ENCODE measurements at regions of chr4 and their contacts with region 1.

Region 1: DNA sequence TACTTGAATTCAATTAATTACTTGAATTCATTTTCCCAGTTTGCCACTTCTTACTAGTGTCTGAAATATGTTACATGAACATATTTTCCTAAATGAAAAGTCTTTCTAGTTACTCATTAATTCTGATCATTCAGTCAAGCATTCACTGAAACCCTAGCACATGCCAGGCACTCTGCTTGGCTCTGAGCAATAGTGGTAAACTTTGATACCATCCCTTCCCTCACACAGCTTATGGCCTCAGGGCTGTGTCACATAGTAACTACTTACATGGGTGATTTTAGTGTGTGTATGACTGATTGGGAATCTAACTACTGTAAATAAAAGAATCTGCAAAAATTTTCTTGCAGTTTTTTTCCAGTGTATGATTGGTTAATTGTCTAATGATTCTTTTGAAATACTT is 32.7 kb downstream of the METAP1 start:
- DNase-seq: no peak
- ATAC-seq: peak; percentile 56
- H3K4me3 Mint-ChIP-seq: no peak overlapping the region
- H3K27ac Mint-ChIP-seq: peak overlapping the region; percentile 13
- H3K4me1 Mint-ChIP-seq: peaks cover 62% of the 10 kb centered on the region
- H3K27me3 Mint-ChIP-seq: no peaks in the 10 kb centered on the region
- CTCF ChIP-seq: no peak

Region 2: DNA sequence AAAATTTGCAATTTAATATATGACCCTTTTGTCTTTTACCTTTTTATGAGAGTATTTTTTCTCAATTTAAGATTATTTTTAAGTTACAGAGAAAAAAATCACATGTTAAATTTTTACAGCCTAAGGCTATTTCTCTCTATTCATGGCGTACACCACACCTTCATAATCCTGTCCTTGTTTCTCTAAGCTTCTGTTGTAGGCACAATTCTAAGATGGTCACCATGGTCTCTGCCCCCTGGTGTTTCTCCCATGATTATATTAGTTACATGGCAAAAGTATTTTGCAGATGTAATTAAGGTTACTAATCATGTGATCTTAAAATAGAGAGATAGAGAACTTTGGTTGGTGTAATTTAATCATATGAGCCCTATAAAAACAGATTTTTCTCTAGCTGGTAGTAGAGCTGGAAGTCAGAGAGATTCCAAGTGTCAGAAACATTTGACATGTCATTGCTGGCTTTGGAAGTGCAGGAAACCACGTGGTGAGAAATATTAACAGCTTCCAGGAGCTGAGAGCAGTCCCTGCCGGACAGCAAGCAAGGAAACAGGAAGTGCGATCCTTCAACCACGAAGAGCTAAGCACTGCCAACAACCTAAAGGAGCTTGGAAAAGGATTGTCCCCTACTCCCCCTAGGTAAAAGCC is 189.1 kb before region 1 on chr4:
- CTCF ChIA-PET with region 1: no interaction called
- POLR2A ChIA-PET with region 1: no interaction called
- intact Hi-C with region 1: no loop called
- DNase-seq: no peak
- ATAC-seq: no peak
- H3K4me3 Mint-ChIP-seq: no peak overlapping the region
- H3K27ac Mint-ChIP-seq: no peak overlapping the region
- H3K4me1 Mint-ChIP-seq: peaks cover 4% of the 10 kb centered on the region
- H3K27me3 Mint-ChIP-seq: no peaks in the 10 kb centered on the region
- CTCF ChIP-seq: no peak

Region 3: GRCh38 chr4:99008051-99008450 is 20.1 kb before region 1 on chr4:
- CTCF ChIA-PET with region 1: no interaction called
- POLR2A ChIA-PET with region 1: interaction called, 3 read pairs
- intact Hi-C with region 1: loop called (anchors 2 kb)
- DNase-seq: no peak
- ATAC-seq: no peak
- H3K4me3 Mint-ChIP-seq: no peak overlapping the region
- H3K27ac Mint-ChIP-seq: no peak overlapping the region
- H3K4me1 Mint-ChIP-seq: peaks cover 22% of the 10 kb centered on the region
- H3K27me3 Mint-ChIP-seq: no peaks in the 10 kb centered on the region
- CTCF ChIP-seq: no peak

Region 4: GRCh38 chr4:99054428-99054994 is 26.3 kb after region 1 on chr4:
- CTCF ChIA-PET with region 1: interaction called, 11 read pairs
- POLR2A ChIA-PET with region 1: no interaction called
- intact Hi-C with region 1: no loop called
- DNase-seq: no peak
- ATAC-seq: no peak
- H3K4me3 Mint-ChIP-seq: no peak overlapping the region
- H3K27ac Mint-ChIP-seq: no peak overlapping the region
- H3K4me1 Mint-ChIP-seq: peaks cover 9% of the 10 kb centered on the region
- H3K27me3 Mint-ChIP-seq: no peaks in the 10 kb centered on the region
- CTCF ChIP-seq: no peak